CD8-positive, alpha-beta T cell (primary cell): ENCODE measurements at regions of chr11 and their contacts with region 1.

Region 1: DNA sequence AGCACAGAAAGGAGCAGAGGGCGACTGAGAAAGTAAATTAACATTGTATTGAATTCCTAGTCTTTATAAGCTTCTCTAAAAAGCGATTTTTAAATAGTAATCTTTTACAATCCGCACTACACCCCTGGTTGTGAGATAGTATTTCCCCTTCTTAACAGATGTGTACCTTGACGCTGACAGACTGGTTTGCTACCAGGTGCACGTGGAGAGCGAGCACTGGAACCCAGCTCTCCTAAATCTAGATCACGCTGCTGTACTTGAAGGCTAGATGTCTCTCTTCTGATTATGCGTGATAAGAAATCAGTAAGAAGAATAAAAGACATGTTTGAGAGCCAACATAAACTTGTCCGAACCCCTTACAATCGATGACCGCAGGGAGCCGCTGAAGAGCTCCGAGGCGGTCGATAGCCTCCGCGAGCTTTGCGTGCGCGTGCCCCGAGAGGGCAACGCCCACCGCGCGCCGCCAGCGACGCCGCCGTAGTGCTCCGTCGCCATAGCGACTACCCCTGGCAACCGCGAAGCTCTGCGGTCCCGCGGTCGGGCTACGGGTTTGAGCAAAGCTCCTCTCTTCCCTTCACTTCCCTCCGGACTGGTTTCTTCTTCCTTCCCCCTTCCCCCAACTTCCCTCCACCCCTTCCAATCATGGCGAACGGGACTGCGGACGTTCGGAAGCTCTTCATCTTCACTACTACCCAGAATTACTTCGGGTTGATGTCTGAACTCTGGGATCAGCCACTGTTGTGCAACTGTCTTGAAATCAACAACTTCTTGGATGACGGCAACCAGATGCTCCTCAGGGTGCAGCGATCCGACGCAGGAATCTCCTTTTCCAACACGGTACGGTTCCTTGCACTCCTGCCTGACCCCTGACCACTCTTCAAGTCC is at the start of gene DYNC2H1:
- DNase-seq: peak; percentile 73 to 94 (median 86)
- ATAC-seq: peak; percentile 91
- H3K4me3 ChIP-seq: peak within 1 kb of the TSS; percentile 67 to 76
- H3K4me3 Mint-ChIP-seq: peak within 1 kb of the TSS; percentile 93
- H3K27ac ChIP-seq: peak within 1 kb of the TSS; percentile 64 to 67
- H3K27ac Mint-ChIP-seq: peak within 1 kb of the TSS; percentile 85
- H3K4me1 ChIP-seq: no peaks in the 10 kb centered on the region
- H3K4me1 Mint-ChIP-seq: peaks cover 14% of the 10 kb centered on the region
- H3K27me3 ChIP-seq: no peaks in the 10 kb centered on the region
- H3K27me3 Mint-ChIP-seq: peaks cover 4% of the 10 kb centered on the region
- CTCF ChIP-seq: peak; percentile 36
- total RNA-seq, gene DYNC2H1: 1.7 to 2.3 TPM

Region 2: GRCh38 chr11:102117472-102118113 is 991.6 kb before region 1 on chr11:
- CTCF ChIA-PET with region 1: no interaction called
- POLR2A ChIA-PET with region 1: interaction called, 10 read pairs
- intact Hi-C with region 1: no loop called
- DNase-seq: no peak
- ATAC-seq: no peak
- H3K4me3 ChIP-seq: no peak overlapping the region
- H3K4me3 Mint-ChIP-seq: no peak overlapping the region
- H3K27ac ChIP-seq: no peak overlapping the region
- H3K27ac Mint-ChIP-seq: no peak overlapping the region
- H3K4me1 ChIP-seq: no peaks in the 10 kb centered on the region
- H3K4me1 Mint-ChIP-seq: peaks cover 3% of the 10 kb centered on the region
- H3K27me3 ChIP-seq: peaks cover 0 to 6% of the 10 kb centered on the region in 2 experiments
- H3K27me3 Mint-ChIP-seq: peaks cover 32% of the 10 kb centered on the region
- CTCF ChIP-seq: no peak

Region 3: GRCh38 chr11:102317099-102317767 is 791.9 kb before region 1 on chr11 and contains the start of gene BIRC3:
- CTCF ChIA-PET with region 1: no interaction called
- POLR2A ChIA-PET with region 1: no interaction called
- intact Hi-C with region 1: loop called in 1 of 2 experiments (anchors 5 kb)
- DNase-seq: peak; percentile 76 to 99 (median 88)
- ATAC-seq: peak; percentile 85
- H3K4me3 ChIP-seq: peak within 1 kb of the TSS; percentile 68 to 80
- H3K4me3 Mint-ChIP-seq: peak within 1 kb of the TSS; percentile 90
- H3K27ac ChIP-seq: peak within 1 kb of the TSS; percentile 82 to 95
- H3K27ac Mint-ChIP-seq: peak within 1 kb of the TSS; percentile 97
- H3K4me1 ChIP-seq: peaks cover 57% of the 10 kb centered on the region
- H3K4me1 Mint-ChIP-seq: peaks cover 79% of the 10 kb centered on the region
- H3K27me3 ChIP-seq: no peaks in the 10 kb centered on the region
- H3K27me3 Mint-ChIP-seq: no peaks in the 10 kb centered on the region
- CTCF ChIP-seq: no peak
- total RNA-seq, gene BIRC3: 88.0 to 90.4 TPM

Region 4: GRCh38 chr11:103035791-103036434 is 73.3 kb before region 1 on chr11:
- CTCF ChIA-PET with region 1: no interaction called
- POLR2A ChIA-PET with region 1: no interaction called
- intact Hi-C with region 1: loop called in 1 of 2 experiments (anchors 5 kb)
- DNase-seq: peak in 6 of 9 experiments; percentile 10 to 80 (median 30)
- ATAC-seq: peak; percentile 93
- H3K4me3 ChIP-seq: no peak overlapping the region
- H3K4me3 Mint-ChIP-seq: no peak overlapping the region
- H3K27ac ChIP-seq: peak overlapping the region in 1 of 2 experiments; percentile 23
- H3K27ac Mint-ChIP-seq: peak overlapping the region; percentile 20
- H3K4me1 ChIP-seq: peaks cover 3% of the 10 kb centered on the region
- H3K4me1 Mint-ChIP-seq: peaks cover 6% of the 10 kb centered on the region
- H3K27me3 ChIP-seq: no peaks in the 10 kb centered on the region
- H3K27me3 Mint-ChIP-seq: no peaks in the 10 kb centered on the region
- CTCF ChIP-seq: peak; percentile 75

Region 5: DNA sequence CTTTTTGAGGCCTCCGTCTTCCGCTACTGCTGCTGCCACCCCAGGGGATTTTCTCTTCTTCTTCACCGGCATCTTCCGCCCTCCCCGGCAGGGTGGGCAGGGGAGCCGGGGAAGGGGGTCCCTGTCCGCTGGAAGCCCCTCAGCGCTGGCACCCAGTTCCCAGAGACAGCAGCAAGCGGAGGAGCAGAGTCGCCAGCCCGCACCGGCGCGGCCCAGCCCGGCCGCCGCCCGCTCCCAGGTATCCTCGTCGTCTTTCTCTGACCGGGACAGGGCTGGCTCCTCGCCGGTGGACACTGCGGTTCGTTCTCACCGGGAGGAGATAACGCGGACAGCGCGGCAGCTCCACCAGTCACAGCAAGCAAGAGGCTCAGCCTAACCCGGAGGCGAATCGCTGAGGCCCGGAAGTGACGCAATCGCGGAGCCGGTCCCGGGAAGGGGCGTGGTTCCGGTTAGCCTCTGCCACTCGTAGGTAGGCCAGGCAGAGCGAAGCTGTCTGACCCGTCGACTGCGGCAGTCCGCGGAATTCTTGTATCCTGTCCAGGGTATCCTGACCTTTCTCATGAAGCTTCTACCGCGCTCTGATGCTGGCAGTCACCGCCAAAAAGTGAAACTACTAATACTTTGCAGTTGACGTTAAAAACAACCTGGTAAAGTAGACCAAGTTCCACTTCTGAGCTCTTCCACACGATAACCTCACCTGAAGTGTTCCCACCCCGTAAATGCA is 17.2 kb before region 1 on chr11 and contains the start of gene DCUN1D5:
- CTCF ChIA-PET with region 1: interaction called, 14 read pairs
- POLR2A ChIA-PET with region 1: interaction called, 41 read pairs
- intact Hi-C with region 1: loop called (anchors 1 kb)
- DNase-seq: peak; percentile 88 to 97 (median 95)
- ATAC-seq: peak; percentile 94
- H3K4me3 ChIP-seq: peak within 1 kb of the TSS; percentile 84 to 91
- H3K4me3 Mint-ChIP-seq: peak within 1 kb of the TSS; percentile 84
- H3K27ac ChIP-seq: peak within 1 kb of the TSS; percentile 81 to 86
- H3K27ac Mint-ChIP-seq: peak within 1 kb of the TSS; percentile 95
- H3K4me1 ChIP-seq: peaks cover 25% of the 10 kb centered on the region
- H3K4me1 Mint-ChIP-seq: peaks cover 30% of the 10 kb centered on the region
- H3K27me3 ChIP-seq: peaks cover 0 to 2% of the 10 kb centered on the region in 2 experiments
- H3K27me3 Mint-ChIP-seq: peaks cover 20% of the 10 kb centered on the region
- CTCF ChIP-seq: no peak
- total RNA-seq, gene DCUN1D5: 17.8 to 19.5 TPM

Region 6: DNA sequence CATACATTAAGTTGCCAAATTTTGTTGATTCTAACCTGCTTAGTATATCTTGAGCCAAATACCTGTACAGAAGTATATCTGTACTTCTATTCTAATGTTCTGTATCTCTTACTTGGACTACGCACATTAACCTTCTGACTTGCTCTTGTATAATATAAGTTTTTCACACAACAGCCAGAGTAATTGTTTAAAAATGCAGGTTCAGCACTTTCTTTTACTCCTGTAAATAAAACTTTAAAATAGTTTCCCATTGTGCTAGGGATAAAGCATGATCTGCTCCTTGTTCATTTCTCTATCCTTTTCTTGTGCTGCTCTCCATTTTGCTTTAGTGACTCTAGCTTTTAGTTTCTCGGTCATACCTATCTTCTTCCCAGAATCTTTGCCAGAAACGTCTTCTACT is 48.4 kb after region 1 on chr11:
- CTCF ChIA-PET with region 1: no interaction called
- POLR2A ChIA-PET with region 1: no interaction called
- intact Hi-C with region 1: no loop called
- DNase-seq: no peak
- ATAC-seq: no peak
- H3K4me3 ChIP-seq: no peak overlapping the region
- H3K4me3 Mint-ChIP-seq: no peak overlapping the region
- H3K27ac ChIP-seq: no peak overlapping the region
- H3K27ac Mint-ChIP-seq: no peak overlapping the region
- H3K4me1 ChIP-seq: no peaks in the 10 kb centered on the region
- H3K4me1 Mint-ChIP-seq: no peaks in the 10 kb centered on the region
- H3K27me3 ChIP-seq: no peaks in the 10 kb centered on the region
- H3K27me3 Mint-ChIP-seq: no peaks in the 10 kb centered on the region
- CTCF ChIP-seq: no peak

Region 7: DNA sequence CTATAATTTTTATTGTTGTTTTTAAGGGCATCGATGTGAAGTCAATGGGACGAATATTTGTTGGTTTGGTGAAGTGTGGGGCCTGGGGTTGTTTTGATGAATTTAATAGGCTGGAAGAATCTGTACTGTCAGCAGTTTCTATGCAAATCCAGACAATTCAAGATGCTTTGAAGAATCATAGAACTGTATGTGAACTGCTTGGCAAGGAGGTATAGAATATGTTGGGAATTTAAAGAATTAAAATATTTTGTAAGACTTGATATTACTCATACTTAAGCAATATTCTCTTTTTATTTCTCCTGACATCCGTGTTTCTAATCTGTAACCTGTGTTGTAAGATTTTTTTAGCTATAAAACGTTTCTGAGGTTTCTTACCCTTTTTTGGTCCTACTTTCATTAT is 61.7 kb after region 1 on chr11:
- CTCF ChIA-PET with region 1: no interaction called
- POLR2A ChIA-PET with region 1: no interaction called
- intact Hi-C with region 1: no loop called
- DNase-seq: no peak
- ATAC-seq: no peak
- H3K4me3 ChIP-seq: no peak overlapping the region
- H3K4me3 Mint-ChIP-seq: no peak overlapping the region
- H3K27ac ChIP-seq: no peak overlapping the region
- H3K27ac Mint-ChIP-seq: no peak overlapping the region
- H3K4me1 ChIP-seq: no peaks in the 10 kb centered on the region
- H3K4me1 Mint-ChIP-seq: no peaks in the 10 kb centered on the region
- H3K27me3 ChIP-seq: no peaks in the 10 kb centered on the region
- H3K27me3 Mint-ChIP-seq: peaks cover 2% of the 10 kb centered on the region
- CTCF ChIP-seq: no peak

Region 8: GRCh38 chr11:103601225-103601846 is 492.2 kb after region 1 on chr11:
- CTCF ChIA-PET with region 1: no interaction called
- POLR2A ChIA-PET with region 1: no interaction called
- intact Hi-C with region 1: loop called in 1 of 2 experiments (anchors 2 kb)
- DNase-seq: peak in 2 of 9 experiments; percentile 25 to 39
- ATAC-seq: peak; percentile 38
- H3K4me3 ChIP-seq: no peak overlapping the region
- H3K4me3 Mint-ChIP-seq: no peak overlapping the region
- H3K27ac ChIP-seq: no peak overlapping the region
- H3K27ac Mint-ChIP-seq: no peak overlapping the region
- H3K4me1 ChIP-seq: no peaks in the 10 kb centered on the region
- H3K4me1 Mint-ChIP-seq: no peaks in the 10 kb centered on the region
- H3K27me3 ChIP-seq: no peaks in the 10 kb centered on the region
- H3K27me3 Mint-ChIP-seq: peaks cover 9% of the 10 kb centered on the region
- CTCF ChIP-seq: peak; percentile 52